ENCODE measurements at regions of chr9 and their contacts with region 1.

Region 1: DNA sequence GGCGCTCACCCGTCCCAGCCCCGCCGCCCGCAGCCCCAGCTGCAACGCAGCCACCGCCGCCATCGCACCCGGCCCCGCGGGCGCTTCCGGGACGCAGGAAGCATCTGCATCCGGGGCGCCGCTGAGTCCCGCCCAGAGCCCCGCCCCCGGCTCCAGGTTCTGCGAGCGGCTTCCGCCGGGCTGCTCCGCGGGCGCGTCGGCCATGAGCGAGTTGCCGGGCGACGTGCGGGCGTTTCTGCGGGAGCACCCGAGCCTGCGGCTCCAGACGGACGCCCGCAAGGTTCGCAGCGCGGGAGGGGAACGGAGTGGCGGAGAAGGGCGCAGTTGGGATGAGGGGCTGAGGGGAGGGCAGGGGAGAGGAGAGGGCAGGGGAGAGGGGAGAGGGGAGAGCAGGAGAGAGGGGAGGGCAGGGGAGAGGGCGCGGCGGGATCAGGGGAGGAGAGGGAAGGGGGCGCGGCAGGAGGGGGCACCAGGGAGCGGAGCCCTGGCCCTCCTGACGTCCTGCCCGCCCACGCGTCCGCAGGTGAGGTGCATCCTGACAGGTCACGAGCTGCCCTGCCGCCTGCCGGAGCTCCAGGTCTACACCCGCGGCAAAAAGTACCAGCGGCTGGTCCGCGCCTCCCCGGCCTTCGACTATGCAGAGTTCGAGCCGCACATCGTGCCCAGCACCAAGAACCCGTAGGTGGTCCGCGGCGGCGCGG is at the starts of genes SURF1 and SURF2:
- DNase-seq: peak; percentile 88
- H3K4me3 Mint-ChIP-seq: peak within 1 kb of the TSS; percentile 78
- H3K27ac Mint-ChIP-seq: peak within 1 kb of the TSS; percentile 42
- H3K4me1 Mint-ChIP-seq: peaks cover 23% of the 10 kb centered on the region
- H3K27me3 Mint-ChIP-seq: no peaks in the 10 kb centered on the region
- CTCF ChIP-seq: no peak
- total RNA-seq, gene SURF1: 47.9 and 50.9 TPM in 2 replicates
- total RNA-seq, gene SURF2: 20.6 and 22.9 TPM in 2 replicates

Region 2: DNA sequence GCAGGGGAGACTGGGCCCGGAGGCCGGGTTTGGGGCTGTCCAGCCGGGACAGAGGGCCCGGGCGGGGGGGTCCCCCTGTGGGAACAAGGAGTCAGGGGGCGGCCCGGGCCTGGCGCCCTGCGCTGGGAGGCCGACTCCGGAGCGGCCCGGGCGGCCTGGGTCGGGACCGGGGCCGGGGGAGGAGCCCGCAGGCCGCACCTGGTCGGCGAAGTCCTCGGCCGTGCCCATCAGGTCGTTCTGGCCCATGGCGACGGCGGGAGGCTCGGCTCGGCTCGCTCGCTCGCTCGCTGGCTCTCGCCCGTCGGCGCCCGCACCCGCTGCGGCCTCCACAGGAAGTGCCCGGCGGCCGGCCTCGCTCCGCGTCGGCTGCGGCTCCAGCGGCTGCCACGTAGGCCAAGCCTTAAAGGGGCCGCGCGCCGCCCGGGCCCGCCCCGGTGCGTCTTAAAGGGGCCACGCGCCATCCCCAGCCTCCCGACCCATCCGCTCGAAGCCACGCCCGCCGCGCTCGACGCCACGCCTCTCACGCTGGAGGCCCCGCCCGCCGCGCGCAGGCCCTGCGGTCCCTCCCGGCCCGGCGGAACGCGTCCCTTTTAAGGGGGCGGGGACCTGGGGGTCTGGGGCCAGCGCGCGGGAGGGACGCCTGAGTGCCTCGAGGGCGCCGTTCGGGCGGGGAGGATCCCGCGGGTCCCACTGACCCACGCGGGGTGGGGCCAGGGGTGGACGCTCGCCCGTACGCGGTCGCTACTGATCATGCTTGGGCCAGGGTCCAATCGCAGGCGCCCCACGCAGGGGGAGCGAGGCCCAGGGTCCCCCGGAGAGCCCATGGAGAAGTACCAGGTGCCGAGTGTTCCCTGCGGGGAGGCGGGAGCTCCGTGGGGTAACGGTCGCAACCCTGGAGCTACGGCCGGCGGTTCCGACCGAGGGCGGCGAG is 19.4 kb after region 1 on chr9 and contains the starts of genes STKLD1 and SURF4:
- CTCF ChIA-PET with region 1: interaction called, 8 read pairs
- intact Hi-C with region 1: loop called (anchors 2 kb)
- DNase-seq: peak; percentile 93
- H3K4me3 Mint-ChIP-seq: peak within 1 kb of the TSS; percentile 89
- H3K27ac Mint-ChIP-seq: peak within 1 kb of the TSS; percentile 88
- H3K4me1 Mint-ChIP-seq: peaks cover 9% of the 10 kb centered on the region
- H3K27me3 Mint-ChIP-seq: no peaks in the 10 kb centered on the region
- CTCF ChIP-seq: no peak
- total RNA-seq, gene STKLD1: 0.71 and 0.94 TPM in 2 replicates
- total RNA-seq, gene SURF4: 128 and 129 TPM in 2 replicates

Measured in Calu3 (cell line).